OCI-LY7 (cell line): ENCODE measurements at regions of chr12 and their contacts with region 1.

Region 1: GRCh38 chr12:50620109-50620977 is 115.6 kb downstream of the DIP2B start:
- DNase-seq: no peak
- H3K4me3 ChIP-seq: no peak overlapping the region
- H3K27ac ChIP-seq: no peak overlapping the region
- H3K4me1 ChIP-seq: peaks cover 12% of the 10 kb centered on the region
- CTCF ChIP-seq: no peak

Region 2: GRCh38 chr12:50572271-50572670 is 48.1 kb before region 1 on chr12:
- CTCF ChIA-PET with region 1: no interaction called
- POLR2A ChIA-PET with region 1: no interaction called
- intact Hi-C with region 1: loop called (anchors 5 kb)
- DNase-seq: no peak
- H3K4me3 ChIP-seq: no peak overlapping the region
- H3K27ac ChIP-seq: no peak overlapping the region
- H3K4me1 ChIP-seq: peaks cover 5% of the 10 kb centered on the region
- CTCF ChIP-seq: no peak